ENCODE measurements at regions of chr3 and their contacts with region 1.

Region 1: GRCh38 chr3:9249273-9250192 is at the start of gene SRGAP3:
- DNase-seq: peak; percentile 83
- H3K4me3 Mint-ChIP-seq: peak within 1 kb of the TSS; percentile 70
- H3K27ac Mint-ChIP-seq: no peak within 1 kb of the TSS
- H3K4me1 Mint-ChIP-seq: peaks cover 19% of the 10 kb centered on the region
- H3K27me3 Mint-ChIP-seq: no peaks in the 10 kb centered on the region
- total RNA-seq, gene SRGAP3: 2.2 to 3.5 TPM

Region 2: DNA sequence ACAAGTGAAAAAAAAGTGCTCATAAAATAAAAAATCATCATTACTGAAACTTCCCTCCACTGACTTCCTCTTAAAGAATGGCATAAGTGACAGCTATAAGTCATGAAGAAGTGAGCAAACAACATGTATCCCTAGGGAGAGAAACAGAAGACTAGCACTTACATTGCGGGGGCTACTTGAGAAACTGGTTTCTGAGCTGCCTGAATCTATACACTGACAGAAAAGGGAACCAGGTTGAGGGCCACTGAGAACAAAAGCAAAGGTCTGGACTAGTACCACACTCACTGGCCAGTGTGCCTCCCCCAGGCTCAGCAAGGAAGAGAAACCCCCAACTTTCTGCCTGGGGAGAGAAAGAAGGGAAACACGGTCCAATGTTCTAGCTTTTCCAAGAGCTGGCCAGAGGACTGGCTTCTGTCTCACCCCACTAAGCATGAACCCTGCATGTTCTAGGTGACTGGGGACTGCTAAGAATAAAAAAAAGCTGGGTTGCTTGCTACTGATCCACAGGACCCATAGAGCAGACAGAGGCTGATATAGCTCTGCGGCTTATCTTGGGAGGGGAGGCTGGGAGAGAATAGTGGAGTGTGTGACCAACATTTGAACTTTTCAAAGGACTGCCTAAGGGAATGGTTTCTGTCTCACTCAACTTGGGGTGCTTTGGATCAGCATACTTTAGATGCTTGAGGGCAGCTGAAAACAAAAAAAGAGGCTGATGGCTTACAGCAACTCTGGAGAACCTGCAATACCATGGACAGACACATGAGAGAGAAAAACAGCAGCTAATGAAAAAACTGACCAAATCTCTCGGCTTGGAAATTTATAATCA is 294.4 kb before region 1 on chr3:
- CTCF ChIA-PET with region 1: no interaction called
- POLR2A ChIA-PET with region 1: no interaction called
- intact Hi-C with region 1: no loop called
- DNase-seq: no peak
- H3K4me3 Mint-ChIP-seq: no peak overlapping the region
- H3K27ac Mint-ChIP-seq: no peak overlapping the region
- H3K4me1 Mint-ChIP-seq: peaks cover 19% of the 10 kb centered on the region
- H3K27me3 Mint-ChIP-seq: no peaks in the 10 kb centered on the region

Region 3: DNA sequence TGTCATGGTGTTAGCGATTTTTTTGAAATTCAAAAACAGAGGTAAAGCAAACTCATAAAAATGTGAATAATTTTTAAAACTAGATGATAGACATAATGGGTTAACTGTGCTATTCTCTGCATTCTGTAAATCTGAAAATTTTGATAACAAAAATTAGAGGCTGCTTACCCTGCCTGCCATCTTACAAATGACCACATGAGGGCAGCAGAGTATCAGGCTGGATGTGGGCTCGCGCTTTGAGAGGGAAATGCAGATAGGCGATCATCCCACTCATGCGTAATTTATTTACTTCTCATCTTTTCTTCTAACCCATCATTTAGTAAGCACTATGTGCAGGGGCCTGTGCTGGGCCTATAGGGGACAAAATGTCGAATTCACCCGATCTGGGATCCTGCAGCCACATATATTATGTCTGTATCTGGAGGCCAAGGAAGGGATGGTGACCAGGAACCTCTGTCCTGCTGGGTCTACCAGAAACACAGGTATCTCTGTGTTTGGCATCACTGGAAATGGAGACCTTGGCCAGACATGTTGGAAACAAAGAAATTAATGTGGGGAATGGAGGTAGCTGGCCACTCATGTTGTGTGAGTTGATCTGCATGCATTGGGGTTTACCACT is 278.5 kb before region 1 on chr3:
- CTCF ChIA-PET with region 1: interaction called, 5 read pairs
- POLR2A ChIA-PET with region 1: no interaction called
- intact Hi-C with region 1: loop called (anchors 2 kb)
- DNase-seq: peak; percentile 79
- H3K4me3 Mint-ChIP-seq: no peak overlapping the region
- H3K27ac Mint-ChIP-seq: no peak overlapping the region
- H3K4me1 Mint-ChIP-seq: peaks cover 3% of the 10 kb centered on the region
- H3K27me3 Mint-ChIP-seq: peaks cover 2% of the 10 kb centered on the region

Region 4: GRCh38 chr3:9168241-9168741 is 81.2 kb before region 1 on chr3:
- CTCF ChIA-PET with region 1: no interaction called
- POLR2A ChIA-PET with region 1: no interaction called
- intact Hi-C with region 1: loop called (anchors 1 kb)
- DNase-seq: peak; percentile 82
- H3K4me3 Mint-ChIP-seq: no peak overlapping the region
- H3K27ac Mint-ChIP-seq: no peak overlapping the region
- H3K4me1 Mint-ChIP-seq: no peaks in the 10 kb centered on the region
- H3K27me3 Mint-ChIP-seq: no peaks in the 10 kb centered on the region

Region 5: GRCh38 chr3:9224490-9224889 is 25.0 kb before region 1 on chr3:
- CTCF ChIA-PET with region 1: no interaction called
- POLR2A ChIA-PET with region 1: interaction called, 3 read pairs
- intact Hi-C with region 1: loop called (anchors 1 kb)
- DNase-seq: peak; percentile 56
- H3K4me3 Mint-ChIP-seq: no peak overlapping the region
- H3K27ac Mint-ChIP-seq: no peak overlapping the region
- H3K4me1 Mint-ChIP-seq: peaks cover 7% of the 10 kb centered on the region
- H3K27me3 Mint-ChIP-seq: no peaks in the 10 kb centered on the region